HepG2 (cell line): ENCODE measurements at regions of chr14 and their contacts with region 1.

Region 1: GRCh38 chr14:22598099-22598899 is at the start of gene ABHD4:
- DNase-seq: peak; percentile 79
- ATAC-seq: peak; percentile 95
- H3K4me3 ChIP-seq: peak within 1 kb of the TSS; percentile 76 to 94 (median 82)
- H3K27ac ChIP-seq: peak within 1 kb of the TSS; percentile 73
- H3K4me1 ChIP-seq: peaks cover 34% of the 10 kb centered on the region
- H3K27me3 ChIP-seq: peaks cover 0 to 13% of the 10 kb centered on the region in 2 experiments; a peak in 2 of 5 replicates
- CTCF ChIP-seq: no peak
- EP300 ChIP-seq: peak; percentile 32 to 50; a peak in 2 of 4 replicates
- POLR2A ChIP-seq: peak in 1 of 2 experiments; percentile 85; a peak in 2 of 4 replicates
- RAD21 ChIP-seq: 0 out of 2 replicates have a peak, but pooled peaks have one; percentile 6
- total RNA-seq, gene ABHD4: 16.1 and 22.8 TPM in 2 replicates

Region 2: DNA sequence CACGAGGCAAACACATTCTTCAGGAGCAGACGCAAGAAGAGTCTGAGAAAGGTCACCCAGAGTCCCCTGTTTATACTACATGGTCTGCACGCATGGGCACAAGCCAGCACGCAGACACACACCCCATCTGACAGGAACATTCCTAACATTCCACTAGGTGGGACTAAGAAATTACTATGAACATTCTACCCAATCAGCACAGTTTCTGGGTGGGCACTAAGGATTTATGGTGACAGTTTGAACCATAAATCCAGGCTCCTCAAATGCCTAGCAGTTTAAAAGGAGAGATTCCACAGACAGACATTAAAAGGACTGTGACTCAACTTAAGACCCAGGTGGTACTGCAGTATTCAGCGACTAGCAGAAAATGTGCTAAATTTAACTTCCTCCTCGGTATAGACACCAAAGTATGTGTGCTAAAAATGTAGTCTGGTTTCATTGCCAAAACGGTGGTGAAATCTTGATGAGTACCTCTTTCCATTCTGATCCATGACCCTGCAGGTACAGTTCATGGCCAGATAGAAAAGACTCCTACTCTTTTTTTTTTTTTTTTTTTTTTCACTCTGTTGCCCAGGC is 16.0 kb after region 1 on chr14:
- CTCF ChIA-PET with region 1: no interaction called
- POLR2A ChIA-PET with region 1: interaction called, 7 read pairs
- in situ Hi-C with region 1: no loop called
- intact Hi-C with region 1: loop called (anchors 2 kb)
- DNase-seq: peak; percentile 83
- ATAC-seq: peak; percentile 88
- H3K4me3 ChIP-seq: no peak overlapping the region
- H3K27ac ChIP-seq: no peak overlapping the region
- H3K4me1 ChIP-seq: peaks cover 14% of the 10 kb centered on the region
- H3K27me3 ChIP-seq: no peaks in the 10 kb centered on the region
- CTCF ChIP-seq: no peak
- EP300 ChIP-seq: no peak
- POLR2A ChIP-seq: no peak; a peak in 1 of 4 replicates
- RAD21 ChIP-seq: no peak

Region 3: DNA sequence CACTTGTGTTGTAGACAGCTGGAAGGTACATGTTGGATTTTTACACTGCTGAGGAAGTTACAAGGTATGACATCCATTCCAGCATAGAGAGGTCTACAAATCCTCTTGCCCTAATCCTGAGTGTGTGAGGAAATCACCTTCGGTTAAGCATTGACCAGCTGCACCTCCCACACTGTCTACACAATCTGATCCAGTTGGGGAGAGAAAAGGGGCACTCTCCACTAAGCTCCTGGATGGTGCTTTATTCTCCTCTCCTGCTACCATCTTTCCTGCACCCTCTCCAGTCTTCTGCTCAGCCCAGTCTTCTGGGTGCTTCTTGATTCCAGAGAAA is 46.0 kb after region 1 on chr14 and contains the start of gene OR6J1:
- CTCF ChIA-PET with region 1: interaction called, 4 read pairs
- POLR2A ChIA-PET with region 1: no interaction called
- in situ Hi-C with region 1: no loop called
- intact Hi-C with region 1: loop called (anchors 2 kb)
- DNase-seq: no peak
- ATAC-seq: peak; percentile 66
- H3K4me3 ChIP-seq: no peak within 1 kb of the TSS
- H3K27ac ChIP-seq: no peak within 1 kb of the TSS
- H3K4me1 ChIP-seq: peaks cover 14% of the 10 kb centered on the region
- H3K27me3 ChIP-seq: peaks cover 0 to 3% of the 10 kb centered on the region in 2 experiments; a peak in 3 of 5 replicates
- CTCF ChIP-seq: no peak
- EP300 ChIP-seq: no peak
- POLR2A ChIP-seq: no peak
- RAD21 ChIP-seq: no peak
- total RNA-seq, gene OR6J1: not detected in 2 replicates

Region 4: DNA sequence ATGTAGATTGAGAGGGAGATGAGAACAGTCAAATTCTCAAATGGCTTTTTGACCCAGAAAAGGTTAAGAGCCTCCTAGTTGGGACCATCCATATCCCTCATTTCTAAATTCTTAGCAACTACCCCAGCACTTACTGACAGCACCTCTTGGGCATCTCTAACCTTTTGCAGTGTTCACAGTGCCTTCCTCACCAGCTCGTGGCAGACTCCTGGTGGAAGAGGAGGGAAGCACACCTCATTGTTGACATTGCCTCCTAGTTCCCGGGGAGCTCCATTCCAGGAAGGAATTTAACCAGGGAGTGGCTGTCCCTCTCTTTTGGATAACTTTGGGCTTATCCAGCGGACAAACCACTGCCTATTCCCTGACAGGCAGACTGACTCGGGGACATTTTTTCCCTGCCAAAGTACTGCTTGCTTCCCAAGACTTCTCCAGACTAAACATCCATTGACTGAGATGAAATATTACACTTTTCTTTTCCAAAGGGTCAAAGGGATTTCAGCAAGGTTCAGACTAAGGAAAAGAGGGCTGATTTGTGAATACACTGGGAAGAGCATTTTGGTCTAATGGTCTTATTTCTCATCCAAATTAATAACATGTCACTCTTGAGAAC is 54.8 kb after region 1 on chr14:
- CTCF ChIA-PET with region 1: interaction called, 6 read pairs
- POLR2A ChIA-PET with region 1: interaction called, 14 read pairs
- in situ Hi-C with region 1: no loop called
- intact Hi-C with region 1: no loop called
- DNase-seq: peak; percentile 86
- ATAC-seq: peak; percentile 98
- H3K4me3 ChIP-seq: no peak overlapping the region
- H3K27ac ChIP-seq: no peak overlapping the region
- H3K4me1 ChIP-seq: 0 out of 2 replicates have a peak, but pooled peaks cover 5% of the 10 kb centered on the region
- H3K27me3 ChIP-seq: peaks cover 3 to 36% of the 10 kb centered on the region in 2 experiments; a peak in 4 of 5 replicates
- CTCF ChIP-seq: peak; percentile 99
- EP300 ChIP-seq: no peak; a peak in 1 of 4 replicates
- POLR2A ChIP-seq: no peak
- RAD21 ChIP-seq: peak; percentile 94